HepG2 (cell line): ENCODE measurements at regions of chr2 and their contacts with region 1.

Region 1: GRCh38 chr2:142957143-142957542 is 79.7 kb downstream of the KYNU start:
- DNase-seq: no peak
- ATAC-seq: no peak
- H3K4me3 ChIP-seq: no peak overlapping the region
- H3K27ac ChIP-seq: no peak overlapping the region
- H3K4me1 ChIP-seq: peaks cover 19% of the 10 kb centered on the region
- H3K27me3 ChIP-seq: no peaks in the 10 kb centered on the region
- CTCF ChIP-seq: no peak
- EP300 ChIP-seq: no peak
- POLR2A ChIP-seq: no peak
- RAD21 ChIP-seq: no peak

Region 2: DNA sequence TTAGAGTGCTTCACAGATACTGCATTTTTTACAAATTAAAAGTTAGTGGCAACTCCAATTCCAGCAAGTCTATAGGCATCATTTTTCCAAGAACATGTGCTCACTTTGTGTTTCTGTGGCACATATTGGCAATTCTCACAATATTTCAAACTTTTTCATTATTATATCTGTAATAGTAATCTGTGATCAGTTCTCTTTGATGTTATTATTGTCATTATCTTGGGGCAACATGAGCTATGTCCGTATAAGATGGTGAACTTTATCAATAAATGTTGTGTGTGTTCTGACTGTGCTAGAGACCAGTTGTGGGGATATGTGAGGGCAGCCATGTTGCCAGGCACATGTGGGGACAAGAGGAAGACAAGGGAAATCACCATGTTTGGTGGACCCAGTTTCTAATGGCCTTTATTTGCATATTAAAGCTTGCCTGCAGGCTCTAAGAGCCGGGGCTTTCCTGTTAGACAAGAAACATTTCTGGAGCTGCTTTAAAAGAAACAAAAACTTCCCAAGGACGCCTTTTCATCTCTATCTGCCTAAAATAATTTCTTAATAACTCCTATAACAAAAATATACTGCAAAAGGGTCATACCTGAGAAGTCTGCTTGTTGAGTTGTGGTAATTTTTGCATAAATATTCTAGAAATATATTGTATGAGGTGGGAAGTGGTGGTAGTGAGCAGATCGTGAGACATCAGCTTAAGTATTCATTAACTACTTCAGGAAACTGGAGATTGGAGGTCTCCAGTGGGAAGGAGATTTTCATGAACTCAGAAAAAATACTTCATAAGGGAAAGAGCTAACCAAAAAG is 42.4 kb before region 1 on chr2:
- CTCF ChIA-PET with region 1: no interaction called
- POLR2A ChIA-PET with region 1: no interaction called
- in situ Hi-C with region 1: no loop called
- intact Hi-C with region 1: loop called (anchors 5 kb)
- DNase-seq: no peak
- ATAC-seq: no peak
- H3K4me3 ChIP-seq: no peak overlapping the region
- H3K27ac ChIP-seq: no peak overlapping the region
- H3K4me1 ChIP-seq: peaks cover 13% of the 10 kb centered on the region
- H3K27me3 ChIP-seq: no peaks in the 10 kb centered on the region
- CTCF ChIP-seq: no peak
- EP300 ChIP-seq: no peak
- POLR2A ChIP-seq: no peak
- RAD21 ChIP-seq: no peak